Heart left ventricle (tissue), 16 donors: ENCODE measurements at regions of chr1 and their contacts with region 1.

Region 1: DNA sequence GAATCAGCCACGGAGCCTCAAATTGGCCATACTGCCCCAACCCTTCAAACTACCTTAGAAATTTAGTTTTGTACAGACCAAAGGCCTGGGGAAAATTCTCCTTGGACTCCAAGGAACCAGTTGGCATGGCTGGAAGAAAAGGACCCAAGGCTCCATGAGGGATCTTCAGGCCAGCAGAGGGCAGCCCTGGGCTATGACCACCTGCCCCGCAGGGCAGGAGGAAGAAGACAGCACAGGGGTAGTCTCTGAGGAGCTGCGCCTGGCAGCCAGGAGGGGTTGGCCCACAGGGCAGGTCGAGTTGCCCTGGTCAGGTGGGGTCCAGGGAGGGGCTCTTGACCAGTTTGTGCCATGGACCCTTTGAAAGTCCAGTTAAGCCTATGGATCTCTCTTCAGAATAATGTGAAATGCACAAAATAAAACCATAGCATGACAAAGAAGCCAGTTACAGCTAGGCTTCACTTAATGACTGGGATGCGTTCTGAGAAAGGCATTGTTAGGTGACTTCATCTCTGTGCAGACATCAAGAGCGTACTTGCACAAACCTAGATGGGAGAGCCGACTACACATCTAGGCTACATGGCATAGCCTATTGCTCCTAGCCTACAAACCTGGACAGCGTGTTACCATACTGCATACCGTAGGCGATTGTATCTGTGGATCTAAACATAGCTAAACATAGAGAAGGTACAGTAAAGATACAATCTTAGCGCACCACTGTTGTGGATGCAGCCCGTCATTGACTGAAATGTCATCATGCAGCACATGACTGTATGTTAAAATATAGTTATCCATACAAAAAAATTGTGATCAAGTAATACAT is 26.1 kb downstream of the CACNA1S start:
- DNase-seq: peak in 2 of 5 donors; percentile 40 to 53
- ATAC-seq: peak in 3 of 4 donors; percentile 69 to 80 (median 74)
- H3K4me3 ChIP-seq: no peak overlapping the region
- H3K27ac ChIP-seq: no peak overlapping the region
- H3K4me1 ChIP-seq: peaks cover 0 to 6% (median 0%) of the 10 kb centered on the region in 12 donors
- H3K27me3 ChIP-seq: peaks cover 0 to 10% (median 0%) of the 10 kb centered on the region in 9 donors
- CTCF ChIP-seq: peak; percentile 35 to 62 (median 46)
- POLR2A ChIP-seq: no peak

Region 2: DNA sequence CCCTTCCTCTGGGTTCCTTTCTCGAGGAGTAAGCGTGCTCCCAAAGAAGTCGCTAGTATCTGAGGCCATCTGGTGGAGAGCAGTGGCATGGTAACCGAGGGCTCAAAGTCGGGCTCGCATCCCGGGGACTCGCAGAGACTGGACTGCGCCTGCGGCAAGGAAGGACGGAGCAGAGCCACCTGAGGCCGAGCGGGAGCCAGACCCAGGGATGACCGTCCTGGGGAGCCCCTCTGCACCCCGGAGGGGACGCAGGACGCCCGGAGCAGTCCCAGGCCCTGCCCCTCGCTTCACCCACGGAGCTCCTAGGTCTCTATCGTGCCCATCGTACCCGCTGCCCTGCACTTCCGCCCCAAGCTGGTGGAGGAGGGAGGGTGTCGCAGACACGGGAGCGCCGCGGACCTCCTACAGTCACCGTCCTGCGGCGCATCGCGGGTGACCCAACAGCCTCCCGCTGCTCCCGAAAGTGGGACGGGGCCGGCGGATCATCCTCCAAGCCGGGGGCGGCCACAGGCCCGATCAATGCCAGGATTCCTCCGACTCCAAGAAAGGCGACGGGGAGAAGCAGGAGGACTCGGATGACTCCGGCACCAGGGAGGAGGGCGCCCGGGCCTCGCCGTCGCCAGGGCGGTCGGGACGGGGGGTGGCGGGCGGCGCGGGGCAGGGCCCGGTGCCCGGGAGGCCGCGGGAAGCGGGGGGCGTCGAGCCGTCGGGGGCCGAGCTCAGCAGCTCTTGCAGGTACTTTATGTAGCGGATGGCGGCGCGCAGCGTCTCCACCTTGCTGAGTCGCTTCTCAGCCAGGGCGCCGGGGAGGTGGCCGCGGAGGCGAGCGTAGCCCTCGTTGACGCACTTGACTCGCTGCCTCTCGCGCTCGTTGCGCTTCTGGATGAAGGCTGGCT is 28.4 kb after region 1 on chr1:
- intact Hi-C with region 1: loop called in 1 of 10 experiments (anchors 2 kb)
- DNase-seq: peak; percentile 78 to 88 (median 87)
- ATAC-seq: peak; percentile 79 to 98 (median 94)
- H3K4me3 ChIP-seq: peak overlapping the region; percentile 3 to 66 (median 52)
- H3K27ac ChIP-seq: no peak overlapping the region
- H3K4me1 ChIP-seq: peaks cover 0 to 15% (median 5%) of the 10 kb centered on the region in 12 donors
- H3K27me3 ChIP-seq: peaks cover 0 to 43% (median 14%) of the 10 kb centered on the region in 9 donors
- CTCF ChIP-seq: peak; percentile 60 to 90 (median 76)
- POLR2A ChIP-seq: no peak

Region 3: GRCh38 chr1:201206176-201206575 is 120.0 kb after region 1 on chr1:
- intact Hi-C with region 1: loop called in 1 of 10 experiments (anchors 10 kb)
- DNase-seq: no peak
- ATAC-seq: peak in 1 of 4 donors; percentile 8
- H3K4me3 ChIP-seq: no peak overlapping the region
- H3K27ac ChIP-seq: no peak overlapping the region
- H3K4me1 ChIP-seq: no peaks in the 10 kb centered on the region
- H3K27me3 ChIP-seq: peaks cover 0 to 1% (median 0%) of the 10 kb centered on the region in 9 donors
- CTCF ChIP-seq: no peak
- POLR2A ChIP-seq: no peak

Region 4: DNA sequence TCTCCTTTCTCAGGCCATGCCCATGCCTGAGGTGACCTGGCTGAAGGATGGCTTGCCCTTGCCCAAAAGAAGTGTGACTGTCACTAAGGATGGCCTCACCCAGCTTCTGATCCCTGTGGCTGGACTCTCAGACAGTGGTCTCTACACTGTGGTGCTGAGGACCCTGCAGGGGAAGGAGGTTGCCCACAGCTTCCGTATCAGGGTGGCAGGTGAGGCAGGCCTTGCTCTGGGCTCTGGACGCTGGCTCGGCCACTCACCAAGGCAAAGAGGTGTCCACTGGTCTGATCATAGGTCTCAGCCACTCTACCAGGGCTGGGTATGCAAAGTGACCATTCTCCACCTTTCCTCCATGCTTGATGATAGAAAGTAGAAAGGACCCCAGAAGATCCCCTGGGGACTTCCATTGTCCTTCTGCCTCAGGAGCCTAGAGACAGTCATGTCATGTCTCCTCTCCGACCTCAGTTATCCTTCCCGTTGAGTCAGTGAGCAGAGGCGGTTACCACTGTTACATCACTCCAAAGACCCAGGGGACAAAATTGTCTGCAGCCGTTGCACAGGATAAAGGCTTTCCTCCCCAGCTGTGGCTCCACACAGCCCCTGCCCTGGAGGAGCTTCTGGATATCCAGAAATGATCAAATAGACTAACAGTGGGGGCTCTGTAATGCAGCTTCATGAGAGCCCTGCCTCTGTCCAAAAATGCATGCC is 138.7 kb after region 1 on chr1:
- intact Hi-C with region 1: loop called in 3 of 10 experiments (anchors 5 to 10 kb)
- DNase-seq: no peak
- ATAC-seq: no peak
- H3K4me3 ChIP-seq: no peak overlapping the region
- H3K27ac ChIP-seq: no peak overlapping the region
- H3K4me1 ChIP-seq: no peaks in the 10 kb centered on the region
- H3K27me3 ChIP-seq: no peaks in the 10 kb centered on the region
- CTCF ChIP-seq: no peak
- POLR2A ChIP-seq: no peak

Region 5: DNA sequence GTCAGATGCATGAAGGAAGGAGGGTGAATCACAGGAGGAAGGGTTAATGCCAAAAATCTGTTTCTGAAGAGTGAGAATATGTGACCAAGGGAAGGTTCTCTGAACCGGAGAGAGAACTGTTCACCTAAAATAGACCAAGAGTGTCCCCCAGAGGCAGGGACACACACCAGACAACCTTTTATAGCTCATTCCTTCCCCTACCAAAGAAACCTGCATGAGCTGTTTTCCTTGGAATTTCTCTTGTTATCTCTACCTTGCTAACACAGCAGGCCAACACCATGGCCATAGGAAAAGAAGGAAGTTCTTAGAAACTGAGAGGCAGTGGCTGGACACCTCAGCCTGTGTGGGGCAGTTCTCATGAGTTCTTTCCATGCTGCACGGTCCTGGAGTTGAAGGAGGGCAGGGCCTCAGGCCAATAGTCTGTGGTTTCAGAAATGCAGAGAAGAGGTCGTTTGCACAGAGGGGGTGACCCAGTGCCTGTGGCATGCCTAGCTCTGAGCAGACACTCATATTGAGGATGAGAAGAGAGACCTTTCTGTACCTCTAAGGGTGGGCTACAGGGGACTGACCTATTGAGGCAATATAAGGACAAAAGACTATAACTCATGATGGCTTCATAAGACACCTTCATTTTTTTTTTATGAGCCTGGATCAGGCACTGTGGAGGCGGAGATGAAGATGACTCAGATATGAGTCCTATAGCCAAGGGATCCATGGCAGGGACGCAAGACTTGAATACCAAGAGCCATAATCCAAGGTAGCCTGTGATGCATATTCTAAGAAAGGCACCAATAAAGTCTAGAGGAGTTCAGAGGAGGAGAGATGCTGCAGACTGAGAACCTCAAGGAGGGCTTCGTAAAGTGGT is 143.9 kb after region 1 on chr1:
- intact Hi-C with region 1: loop called in 1 of 10 experiments (anchors 10 kb)
- DNase-seq: peak in 1 of 5 donors; percentile 2
- ATAC-seq: no peak
- H3K4me3 ChIP-seq: no peak overlapping the region
- H3K27ac ChIP-seq: no peak overlapping the region
- H3K4me1 ChIP-seq: no peaks in the 10 kb centered on the region
- H3K27me3 ChIP-seq: no peaks in the 10 kb centered on the region
- CTCF ChIP-seq: no peak
- POLR2A ChIP-seq: no peak